IMR-90 (cell line): ENCODE measurements at regions of chr13 and their contacts with region 1.

Region 1: GRCh38 chr13:99721606-99722337 is 220.5 kb downstream of the TM9SF2 start:
- DNase-seq: no peak
- ATAC-seq: no peak
- H3K4me3 ChIP-seq: no peak overlapping the region
- H3K27ac ChIP-seq: no peak overlapping the region
- H3K4me1 ChIP-seq: no peaks in the 10 kb centered on the region
- H3K27me3 ChIP-seq: peaks cover 4% of the 10 kb centered on the region
- CTCF ChIP-seq: no peak
- POLR2A ChIP-seq: no peak
- RAD21 ChIP-seq: no peak

Region 2: DNA sequence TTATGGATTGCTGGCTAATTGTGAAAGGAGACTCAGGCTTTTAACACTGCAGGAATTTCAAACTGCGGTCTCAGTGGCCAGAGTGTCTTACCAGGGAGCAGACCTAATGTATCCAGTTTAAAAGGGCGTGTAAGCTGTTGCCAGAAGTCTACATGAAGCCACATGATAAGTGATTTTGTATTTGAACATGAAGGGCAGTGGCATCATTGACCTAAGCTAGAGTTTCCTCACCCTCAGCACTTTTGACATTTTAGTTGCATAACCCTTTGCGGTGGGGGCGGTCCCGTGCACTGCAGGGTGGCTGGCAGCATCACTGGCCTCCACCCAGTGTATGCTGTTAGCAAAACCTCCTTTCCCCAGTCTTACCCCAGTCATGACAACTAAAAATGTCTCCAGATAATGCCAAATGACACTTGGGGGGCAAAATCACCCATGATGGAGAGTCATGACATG is 439.9 kb before region 1 on chr13:
- CTCF ChIA-PET with region 1: no interaction called
- POLR2A ChIA-PET with region 1: interaction called, 26 read pairs
- dilution Hi-C with region 1: no loop called
- in situ Hi-C with region 1: no loop called
- intact Hi-C with region 1: no loop called
- DNase-seq: no peak
- ATAC-seq: no peak
- H3K4me3 ChIP-seq: no peak overlapping the region
- H3K27ac ChIP-seq: no peak overlapping the region
- H3K4me1 ChIP-seq: peaks cover 6% of the 10 kb centered on the region; the same call in 1 of the 2 replicates
- H3K27me3 ChIP-seq: no peaks in the 10 kb centered on the region
- CTCF ChIP-seq: no peak
- POLR2A ChIP-seq: no peak
- RAD21 ChIP-seq: no peak